ENCODE measurements at regions of chr2 and their contacts with region 1.

Region 1: GRCh38 chr2:201231781-201232466 is 28.4 kb upstream of the CASP8 start:
- DNase-seq: peak; percentile 90 to 94 (median 91)
- H3K4me3 ChIP-seq: peak overlapping the region in 1 of 2 donors; percentile 36
- H3K4me3 Mint-ChIP-seq: peak overlapping the region; percentile 62 to 98 (median 96)
- H3K27ac ChIP-seq: peak overlapping the region; percentile 84
- H3K27ac Mint-ChIP-seq: peak overlapping the region; percentile 79 to 96 (median 90)
- H3K4me1 ChIP-seq: peaks cover 47% of the 10 kb centered on the region
- H3K4me1 Mint-ChIP-seq: peaks cover 32 to 63% (median 42%) of the 10 kb centered on the region in 4 donors
- H3K27me3 ChIP-seq: no peaks in the 10 kb centered on the region
- H3K27me3 Mint-ChIP-seq: no peaks in the 10 kb centered on the region

Region 2: GRCh38 chr2:200713003-200713703 is 518.8 kb before region 1 on chr2:
- CTCF ChIA-PET with region 1: interaction called, 6 read pairs
- POLR2A ChIA-PET with region 1: interaction called, 7 read pairs
- intact Hi-C with region 1: loop called (anchors 1 kb)
- DNase-seq: peak; percentile 92 to 98 (median 95)
- H3K4me3 ChIP-seq: peak overlapping the region in 1 of 2 donors; percentile 35
- H3K4me3 Mint-ChIP-seq: peak overlapping the region; percentile 78 to 86 (median 84)
- H3K27ac ChIP-seq: peak overlapping the region; percentile 78
- H3K27ac Mint-ChIP-seq: peak overlapping the region; percentile 98 to 99 (median 98)
- H3K4me1 ChIP-seq: peaks cover 14% of the 10 kb centered on the region
- H3K4me1 Mint-ChIP-seq: peaks cover 8 to 13% (median 11%) of the 10 kb centered on the region in 4 donors
- H3K27me3 ChIP-seq: no peaks in the 10 kb centered on the region
- H3K27me3 Mint-ChIP-seq: no peaks in the 10 kb centered on the region

Region 3: GRCh38 chr2:200963124-200963917 is 268.6 kb before region 1 on chr2 and contains the start of gene ORC2:
- CTCF ChIA-PET with region 1: interaction called, 18 read pairs
- POLR2A ChIA-PET with region 1: interaction called, 7 read pairs
- intact Hi-C with region 1: loop called (anchors 1 kb)
- DNase-seq: peak; percentile 93 to 97 (median 94)
- H3K4me3 ChIP-seq: peak within 1 kb of the TSS; percentile 87 to 95
- H3K4me3 Mint-ChIP-seq: peak within 1 kb of the TSS; percentile 96 to 99 (median 98)
- H3K27ac ChIP-seq: peak within 1 kb of the TSS; percentile 79
- H3K27ac Mint-ChIP-seq: peak within 1 kb of the TSS; percentile 98 to 100 (median 99)
- H3K4me1 ChIP-seq: peaks cover 47% of the 10 kb centered on the region
- H3K4me1 Mint-ChIP-seq: peaks cover 35 to 73% (median 56%) of the 10 kb centered on the region in 4 donors
- H3K27me3 ChIP-seq: no peaks in the 10 kb centered on the region
- H3K27me3 Mint-ChIP-seq: no peaks in the 10 kb centered on the region
- total RNA-seq, gene ORC2: 72.2 to 76.4 TPM

Region 4: DNA sequence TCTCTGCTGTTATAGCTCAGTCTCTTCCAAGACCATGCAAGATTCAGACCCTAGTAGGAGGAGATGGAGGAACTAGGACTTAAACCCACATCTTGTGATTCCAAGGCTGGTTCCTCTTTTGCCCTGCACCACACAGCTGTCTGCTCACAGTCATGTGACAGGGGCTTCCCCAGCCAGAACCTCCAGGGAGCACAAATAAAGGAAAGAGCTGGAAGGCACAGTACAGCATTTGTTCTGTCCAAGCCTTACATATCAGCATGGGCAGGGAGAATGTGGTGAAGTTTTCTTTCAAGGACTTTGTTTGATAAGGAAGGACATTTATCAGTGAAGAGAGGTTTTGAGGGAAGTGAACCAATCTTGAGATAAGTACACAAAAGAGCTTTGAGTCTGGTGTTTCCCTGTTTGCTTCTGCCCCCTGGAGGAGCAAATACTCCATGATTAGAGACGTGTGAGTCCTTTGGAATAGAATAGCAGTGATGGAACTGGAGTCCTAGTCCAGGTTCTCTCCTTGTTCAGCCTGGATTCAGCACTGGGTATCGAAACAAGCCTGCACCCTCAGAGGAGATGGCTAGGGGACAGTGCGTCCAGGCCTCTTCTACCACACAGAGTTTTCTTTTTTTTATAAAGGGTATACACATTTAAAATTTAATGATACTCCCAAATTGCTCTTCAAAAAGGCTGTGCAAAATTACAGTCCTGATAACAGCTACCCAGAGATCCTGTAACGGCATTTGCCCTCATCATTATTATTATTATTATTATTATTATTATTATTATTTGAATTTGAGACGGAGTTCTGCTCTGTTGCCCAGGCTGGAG is 73.6 kb before region 1 on chr2:
- CTCF ChIA-PET with region 1: interaction called, 30 read pairs
- POLR2A ChIA-PET with region 1: interaction called, 6 read pairs
- intact Hi-C with region 1: no loop called
- DNase-seq: peak; percentile 64 to 75 (median 68)
- H3K4me3 ChIP-seq: no peak overlapping the region
- H3K4me3 Mint-ChIP-seq: peak overlapping the region in 3 of 8 donors; percentile 26 to 52 (median 30)
- H3K27ac ChIP-seq: peak overlapping the region; percentile 44
- H3K27ac Mint-ChIP-seq: peak overlapping the region; percentile 69 to 95 (median 89)
- H3K4me1 ChIP-seq: peaks cover 19% of the 10 kb centered on the region
- H3K4me1 Mint-ChIP-seq: peaks cover 9 to 23% (median 16%) of the 10 kb centered on the region in 4 donors
- H3K27me3 ChIP-seq: no peaks in the 10 kb centered on the region
- H3K27me3 Mint-ChIP-seq: no peaks in the 10 kb centered on the region

Region 5: DNA sequence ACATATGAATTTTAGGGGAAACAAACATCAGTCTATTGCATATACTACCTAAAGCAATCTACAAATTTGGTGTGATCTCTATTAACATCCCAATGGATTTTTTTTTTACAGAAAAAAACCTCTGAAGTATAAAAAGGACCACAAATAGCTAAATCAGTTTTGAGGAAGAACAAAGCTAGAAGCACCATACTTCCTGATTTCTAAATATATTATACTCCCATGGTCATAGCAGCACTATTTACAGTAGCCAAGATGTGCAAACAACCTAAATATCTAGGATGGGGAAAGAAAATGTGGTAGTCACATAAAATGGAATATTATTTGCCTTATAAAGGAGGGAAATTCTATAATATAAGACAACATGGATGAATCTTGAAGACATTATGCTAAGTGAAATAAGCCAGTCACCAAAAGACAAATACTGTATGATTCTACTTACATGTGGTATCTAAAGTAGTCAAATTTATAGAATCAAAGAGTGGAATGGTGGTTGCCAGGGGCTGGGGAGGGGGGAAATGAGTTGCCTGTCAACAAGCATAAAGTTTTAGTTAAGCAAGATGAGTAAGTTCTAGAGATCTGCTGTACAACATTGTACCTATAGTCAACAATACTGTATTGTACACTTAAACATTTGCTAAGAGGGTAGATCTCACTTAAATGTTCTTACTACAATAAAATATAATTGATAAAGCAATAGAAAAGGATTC is 10.8 kb after region 1 on chr2:
- CTCF ChIA-PET with region 1: interaction called, 11 read pairs
- POLR2A ChIA-PET with region 1: interaction called, 4 read pairs
- intact Hi-C with region 1: no loop called
- DNase-seq: no peak
- H3K4me3 ChIP-seq: no peak overlapping the region
- H3K4me3 Mint-ChIP-seq: no peak overlapping the region
- H3K27ac ChIP-seq: no peak overlapping the region
- H3K27ac Mint-ChIP-seq: peak overlapping the region in 5 of 7 donors; percentile 28 to 71 (median 58)
- H3K4me1 ChIP-seq: peaks cover 42% of the 10 kb centered on the region
- H3K4me1 Mint-ChIP-seq: peaks cover 36 to 73% (median 54%) of the 10 kb centered on the region in 4 donors
- H3K27me3 ChIP-seq: no peaks in the 10 kb centered on the region
- H3K27me3 Mint-ChIP-seq: no peaks in the 10 kb centered on the region

Region 6: DNA sequence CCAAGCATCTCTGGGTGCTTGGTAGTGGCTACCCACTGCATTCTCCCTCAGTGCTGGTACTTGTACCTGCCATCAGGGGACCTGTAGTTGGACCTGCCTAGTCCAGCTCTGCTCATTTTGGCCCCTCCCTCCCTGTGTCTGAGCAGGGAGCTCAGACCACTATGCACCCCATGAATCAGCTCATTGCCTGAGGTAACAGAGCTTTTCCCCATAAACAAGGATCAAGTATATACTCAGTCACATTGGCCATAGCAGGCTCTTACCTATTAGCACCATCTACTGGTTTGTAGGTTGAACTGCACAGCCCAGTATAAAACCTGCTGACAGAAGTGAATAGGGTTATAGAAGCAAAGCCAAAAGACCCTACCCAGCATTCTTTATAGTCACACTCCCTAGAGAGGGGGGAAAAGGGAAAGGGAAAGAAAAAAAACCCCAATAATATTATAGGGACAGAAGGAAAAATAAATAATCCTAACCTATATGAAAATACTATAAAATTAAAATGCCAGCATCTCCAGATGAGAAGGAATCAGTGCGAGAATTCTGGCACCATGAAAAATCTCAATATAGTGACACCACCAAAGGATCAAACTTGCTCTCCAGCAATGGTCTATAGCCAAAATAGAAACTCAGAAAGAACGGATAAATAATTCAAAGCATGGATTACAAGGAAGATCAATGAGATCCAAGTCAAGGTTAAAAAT is 132.1 kb after region 1 on chr2:
- CTCF ChIA-PET with region 1: interaction called, 91 read pairs
- POLR2A ChIA-PET with region 1: interaction called, 17 read pairs
- intact Hi-C with region 1: loop called (anchors 1 kb)
- DNase-seq: peak in 4 of 5 donors; percentile 49 to 59 (median 58)
- H3K4me3 ChIP-seq: no peak overlapping the region
- H3K4me3 Mint-ChIP-seq: peak overlapping the region in 3 of 8 donors; percentile 24 to 51 (median 32)
- H3K27ac ChIP-seq: no peak overlapping the region
- H3K27ac Mint-ChIP-seq: peak overlapping the region in 4 of 7 donors; percentile 38 to 84 (median 70)
- H3K4me1 ChIP-seq: peaks cover 31% of the 10 kb centered on the region
- H3K4me1 Mint-ChIP-seq: peaks cover 20 to 33% (median 27%) of the 10 kb centered on the region in 4 donors
- H3K27me3 ChIP-seq: no peaks in the 10 kb centered on the region
- H3K27me3 Mint-ChIP-seq: no peaks in the 10 kb centered on the region

Region 7: GRCh38 chr2:201860636-201861066 is 628.7 kb after region 1 on chr2:
- CTCF ChIA-PET with region 1: no interaction called
- POLR2A ChIA-PET with region 1: no interaction called
- intact Hi-C with region 1: loop called (anchors 2 kb)
- DNase-seq: peak in 4 of 5 donors; percentile 40 to 50 (median 46)
- H3K4me3 ChIP-seq: no peak overlapping the region
- H3K4me3 Mint-ChIP-seq: peak overlapping the region in 2 of 8 donors; percentile 50 to 62
- H3K27ac ChIP-seq: no peak overlapping the region
- H3K27ac Mint-ChIP-seq: no peak overlapping the region
- H3K4me1 ChIP-seq: peaks cover 12% of the 10 kb centered on the region
- H3K4me1 Mint-ChIP-seq: peaks cover 13 to 19% (median 16%) of the 10 kb centered on the region in 4 donors
- H3K27me3 ChIP-seq: no peaks in the 10 kb centered on the region
- H3K27me3 Mint-ChIP-seq: peaks cover 18 to 28% of the 10 kb centered on the region in 2 donors